PC-9 (cell line): ENCODE measurements at regions of chr11 and their contacts with region 1.

Region 1: GRCh38 chr11:104968355-104968855 is at the start of gene CASP4:
- DNase-seq: peak; percentile 20 to 96
- H3K4me3 ChIP-seq: peak within 1 kb of the TSS; percentile 65
- H3K27ac ChIP-seq: peak within 1 kb of the TSS; percentile 93
- H3K4me1 ChIP-seq: peaks cover 30% of the 10 kb centered on the region
- H3K27me3 ChIP-seq: no peaks in the 10 kb centered on the region
- CTCF ChIP-seq: no peak
- total RNA-seq, gene CASP4: 57.5 and 82.2 TPM in 2 replicates

Region 2: GRCh38 chr11:103529181-103529684 is 1439.2 kb before region 1 on chr11:
- CTCF ChIA-PET with region 1: no interaction called
- POLR2A ChIA-PET with region 1: no interaction called
- intact Hi-C with region 1: loop called (anchors 10 kb)
- DNase-seq: peak; percentile 19 to 66
- H3K4me3 ChIP-seq: no peak overlapping the region
- H3K27ac ChIP-seq: peak overlapping the region; percentile 5; the same call in 1 of the 2 replicates
- H3K4me1 ChIP-seq: peaks cover 55% of the 10 kb centered on the region
- H3K27me3 ChIP-seq: no peaks in the 10 kb centered on the region
- CTCF ChIP-seq: no peak

Region 3: GRCh38 chr11:103773059-103773458 is 1195.3 kb before region 1 on chr11:
- CTCF ChIA-PET with region 1: no interaction called
- POLR2A ChIA-PET with region 1: interaction called, 10 read pairs
- intact Hi-C with region 1: no loop called
- DNase-seq: no peak
- H3K4me3 ChIP-seq: no peak overlapping the region
- H3K27ac ChIP-seq: no peak overlapping the region
- H3K4me1 ChIP-seq: no peaks in the 10 kb centered on the region
- H3K27me3 ChIP-seq: no peaks in the 10 kb centered on the region
- CTCF ChIP-seq: no peak

Region 4: GRCh38 chr11:104451197-104451893 is 517.1 kb before region 1 on chr11:
- CTCF ChIA-PET with region 1: no interaction called
- POLR2A ChIA-PET with region 1: no interaction called
- intact Hi-C with region 1: loop called (anchors 1 kb)
- DNase-seq: no peak
- H3K4me3 ChIP-seq: peak overlapping the region; percentile 30; the same call in 1 of the 2 replicates
- H3K27ac ChIP-seq: peak overlapping the region; percentile 91
- H3K4me1 ChIP-seq: peaks cover 46% of the 10 kb centered on the region
- H3K27me3 ChIP-seq: no peaks in the 10 kb centered on the region
- CTCF ChIP-seq: no peak

Region 5: GRCh38 chr11:104736502-104736901 is 231.9 kb before region 1 on chr11:
- CTCF ChIA-PET with region 1: no interaction called
- POLR2A ChIA-PET with region 1: no interaction called
- intact Hi-C with region 1: no loop called
- DNase-seq: no peak
- H3K4me3 ChIP-seq: no peak overlapping the region
- H3K27ac ChIP-seq: no peak overlapping the region
- H3K4me1 ChIP-seq: no peaks in the 10 kb centered on the region
- H3K27me3 ChIP-seq: no peaks in the 10 kb centered on the region
- CTCF ChIP-seq: no peak

Region 6: GRCh38 chr11:104772806-104773241 is 195.6 kb before region 1 on chr11:
- CTCF ChIA-PET with region 1: no interaction called
- POLR2A ChIA-PET with region 1: no interaction called
- intact Hi-C with region 1: loop called (anchors 5 kb)
- DNase-seq: peak in 1 of 2 experiments; percentile 82
- H3K4me3 ChIP-seq: no peak overlapping the region
- H3K27ac ChIP-seq: no peak overlapping the region
- H3K4me1 ChIP-seq: peaks cover 27% of the 10 kb centered on the region
- H3K27me3 ChIP-seq: no peaks in the 10 kb centered on the region
- CTCF ChIP-seq: no peak

Region 7: GRCh38 chr11:104946907-104947306 is 21.5 kb before region 1 on chr11:
- CTCF ChIA-PET with region 1: interaction called, 3 read pairs
- POLR2A ChIA-PET with region 1: interaction called, 10 read pairs
- intact Hi-C with region 1: no loop called
- DNase-seq: peak in 1 of 2 experiments; percentile 46
- H3K4me3 ChIP-seq: no peak overlapping the region
- H3K27ac ChIP-seq: no peak overlapping the region
- H3K4me1 ChIP-seq: no peaks in the 10 kb centered on the region
- H3K27me3 ChIP-seq: no peaks in the 10 kb centered on the region
- CTCF ChIP-seq: peak; percentile 76

Region 8: DNA sequence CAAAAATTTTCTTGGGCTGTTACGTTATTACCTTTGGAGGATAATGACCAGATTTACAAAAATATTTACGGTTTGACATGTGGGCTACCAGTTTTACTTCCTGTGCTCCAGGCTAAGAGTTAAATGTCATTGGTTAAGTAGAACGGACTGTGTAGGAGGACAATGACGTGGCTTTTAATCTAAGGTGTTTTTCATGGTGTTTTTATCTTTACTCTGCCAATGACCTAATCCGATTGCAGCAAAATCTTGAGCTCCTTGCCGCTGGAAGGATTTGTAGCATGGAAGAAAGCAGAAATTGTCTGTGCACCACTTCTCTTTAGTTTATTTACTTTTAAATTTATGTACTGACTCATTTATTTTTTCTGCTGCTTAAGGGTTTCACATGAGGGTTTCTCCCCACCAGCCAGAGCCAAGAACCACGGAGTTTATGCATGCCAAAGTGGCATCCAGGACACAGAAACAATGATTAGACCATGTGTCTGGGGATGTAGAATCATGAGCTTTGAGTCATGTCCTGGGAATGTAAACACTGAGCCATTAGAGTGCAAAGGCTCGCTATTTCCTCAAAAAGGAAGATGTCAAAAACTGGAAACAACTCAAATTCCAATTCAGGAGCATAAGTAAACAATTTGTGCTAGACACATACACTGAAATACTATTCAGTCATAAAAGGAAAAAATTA is 78.6 kb after region 1 on chr11:
- CTCF ChIA-PET with region 1: no interaction called
- POLR2A ChIA-PET with region 1: no interaction called
- intact Hi-C with region 1: loop called (anchors 1 kb)
- DNase-seq: peak; percentile 60 to 94
- H3K4me3 ChIP-seq: peak overlapping the region; percentile 5; the same call in 1 of the 2 replicates
- H3K27ac ChIP-seq: peak overlapping the region; percentile 63
- H3K4me1 ChIP-seq: peaks cover 20% of the 10 kb centered on the region
- H3K27me3 ChIP-seq: no peaks in the 10 kb centered on the region
- CTCF ChIP-seq: no peak

Region 9: DNA sequence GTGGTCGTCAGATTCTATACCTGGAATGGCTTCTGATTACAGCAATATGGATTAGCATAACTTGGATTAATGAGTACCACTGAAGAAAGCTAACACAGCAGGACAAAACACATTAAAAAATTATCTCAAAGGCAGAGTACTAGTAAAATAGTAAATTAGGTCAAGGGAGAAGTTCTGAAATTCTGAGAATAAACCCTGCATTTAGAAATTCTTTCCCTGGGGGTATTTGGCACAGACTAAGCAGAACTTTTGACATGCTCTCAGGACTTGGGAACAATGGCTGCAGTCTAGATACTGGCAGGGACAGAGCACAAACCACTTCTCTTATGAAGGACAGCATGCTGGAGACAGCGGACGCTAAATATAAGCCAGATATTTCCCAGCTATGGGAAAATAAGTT is 555.9 kb after region 1 on chr11:
- CTCF ChIA-PET with region 1: no interaction called
- POLR2A ChIA-PET with region 1: no interaction called
- intact Hi-C with region 1: no loop called
- DNase-seq: no peak
- H3K4me3 ChIP-seq: no peak overlapping the region
- H3K27ac ChIP-seq: no peak overlapping the region
- H3K4me1 ChIP-seq: no peaks in the 10 kb centered on the region
- H3K27me3 ChIP-seq: no peaks in the 10 kb centered on the region
- CTCF ChIP-seq: no peak